ENCODE measurements at regions of chr3 and their contacts with region 1.

Region 1: GRCh38 chr3:112293368-112294321 is at the start of gene SLC9C1:
- DNase-seq: peak in 2 of 5 donors; percentile 43 to 52
- ATAC-seq: peak; percentile 77 to 91 (median 88)
- H3K4me3 ChIP-seq: peak within 1 kb of the TSS; percentile 3 to 58 (median 50)
- H3K27ac ChIP-seq: peak within 1 kb of the TSS; percentile 39 to 78 (median 68)
- H3K4me1 ChIP-seq: peaks cover 0 to 23% (median 4%) of the 10 kb centered on the region in 12 donors
- H3K27me3 ChIP-seq: no peaks in the 10 kb centered on the region
- CTCF ChIP-seq: peak; percentile 40 to 77 (median 62)
- POLR2A ChIP-seq: no peak
- total RNA-seq, gene SLC9C1: 0.48 to 3.8 (median 1.4) TPM

Region 2: DNA sequence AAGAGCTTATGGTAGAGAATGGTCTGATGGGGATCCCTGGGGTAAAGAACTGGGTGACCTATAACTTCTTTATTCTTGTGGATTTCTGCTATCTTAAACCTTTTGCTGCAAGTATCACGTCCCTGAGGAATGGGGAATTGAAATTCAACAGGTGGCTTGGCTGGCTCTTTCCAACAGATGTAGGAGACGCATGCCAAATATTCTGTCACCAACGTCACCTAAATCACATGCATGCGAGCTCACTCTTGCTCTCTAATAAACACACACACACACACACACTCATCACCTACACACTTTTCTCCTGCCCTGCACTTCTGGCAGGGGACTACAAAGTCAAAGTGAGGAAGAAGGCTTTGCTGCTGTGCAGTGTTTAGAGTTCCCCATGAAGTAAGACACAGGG is 1367.8 kb before region 1 on chr3:
- intact Hi-C with region 1: no loop called
- DNase-seq: no peak
- ATAC-seq: peak in 1 of 4 donors; percentile 55
- H3K4me3 ChIP-seq: no peak overlapping the region
- H3K27ac ChIP-seq: no peak overlapping the region
- H3K4me1 ChIP-seq: peaks cover 0 to 6% (median 0%) of the 10 kb centered on the region in 12 donors
- H3K27me3 ChIP-seq: no peaks in the 10 kb centered on the region
- CTCF ChIP-seq: no peak
- POLR2A ChIP-seq: no peak

Region 3: GRCh38 chr3:112074006-112074405 is 219.6 kb before region 1 on chr3:
- intact Hi-C with region 1: no loop called
- DNase-seq: no peak
- ATAC-seq: no peak
- H3K4me3 ChIP-seq: no peak overlapping the region
- H3K27ac ChIP-seq: no peak overlapping the region
- H3K4me1 ChIP-seq: peaks cover 0 to 11% (median 0%) of the 10 kb centered on the region in 12 donors
- H3K27me3 ChIP-seq: no peaks in the 10 kb centered on the region
- CTCF ChIP-seq: no peak
- POLR2A ChIP-seq: no peak

Region 4: DNA sequence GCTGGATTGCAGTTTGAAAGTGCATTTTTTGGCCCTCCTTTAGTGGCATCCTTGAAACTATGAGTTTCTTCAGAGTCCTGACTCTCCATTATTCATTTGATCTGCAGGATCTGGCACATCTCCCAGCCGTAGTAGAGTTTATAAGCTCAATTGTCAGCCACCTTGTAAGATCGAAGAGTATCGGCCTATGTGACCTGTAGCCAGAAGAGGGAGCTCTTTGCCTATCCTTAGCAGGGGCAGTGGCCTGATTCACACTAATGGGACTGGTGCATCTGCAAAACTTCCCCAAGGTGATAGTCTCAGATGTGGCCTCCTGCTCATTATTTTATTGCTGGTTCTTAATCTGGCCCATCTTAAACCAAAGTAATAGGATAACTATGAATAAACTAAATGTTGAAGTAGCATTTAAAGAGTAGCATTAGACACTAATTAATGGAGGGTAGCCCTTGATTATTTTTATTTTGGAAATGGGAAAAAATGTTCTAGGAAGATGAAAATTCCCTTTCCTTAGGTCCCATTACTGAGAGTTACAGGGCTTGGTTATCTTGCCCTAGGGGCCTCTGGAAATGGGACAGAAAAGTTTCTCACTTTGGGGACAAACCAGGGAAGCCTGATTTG is 181.8 kb before region 1 on chr3:
- intact Hi-C with region 1: loop called in 2 of 10 experiments (anchors 5 to 10 kb)
- DNase-seq: peak in 2 of 5 donors; percentile 39 to 40
- ATAC-seq: peak; percentile 64 to 86 (median 77)
- H3K4me3 ChIP-seq: no peak overlapping the region
- H3K27ac ChIP-seq: no peak overlapping the region
- H3K4me1 ChIP-seq: peaks cover 0 to 15% (median 8%) of the 10 kb centered on the region in 12 donors
- H3K27me3 ChIP-seq: no peaks in the 10 kb centered on the region
- CTCF ChIP-seq: peak; percentile 62 to 82 (median 70)
- POLR2A ChIP-seq: no peak

Region 5: GRCh38 chr3:112117841-112118571 is 175.6 kb before region 1 on chr3:
- intact Hi-C with region 1: loop called in 3 of 10 experiments (anchors 5 to 10 kb)
- DNase-seq: peak in 4 of 5 donors; percentile 27 to 65 (median 43)
- ATAC-seq: no peak
- H3K4me3 ChIP-seq: no peak overlapping the region
- H3K27ac ChIP-seq: peak overlapping the region in 3 of 12 donors; percentile 43 to 63 (median 55)
- H3K4me1 ChIP-seq: peaks cover 0 to 48% (median 9%) of the 10 kb centered on the region in 12 donors
- H3K27me3 ChIP-seq: no peaks in the 10 kb centered on the region
- CTCF ChIP-seq: peak in 1 of 12 donors; percentile 7
- POLR2A ChIP-seq: no peak

Region 6: GRCh38 chr3:112128843-112129727 is 164.6 kb before region 1 on chr3:
- intact Hi-C with region 1: loop called in 1 of 10 experiments (anchors 10 kb)
- DNase-seq: no peak
- ATAC-seq: no peak
- H3K4me3 ChIP-seq: no peak overlapping the region
- H3K27ac ChIP-seq: peak overlapping the region in 1 of 12 donors; percentile 13
- H3K4me1 ChIP-seq: peaks cover 0 to 55% (median 14%) of the 10 kb centered on the region in 12 donors
- H3K27me3 ChIP-seq: no peaks in the 10 kb centered on the region
- CTCF ChIP-seq: no peak
- POLR2A ChIP-seq: no peak

Region 7: GRCh38 chr3:112187300-112187699 is 106.3 kb before region 1 on chr3:
- intact Hi-C with region 1: no loop called
- DNase-seq: no peak
- ATAC-seq: no peak
- H3K4me3 ChIP-seq: no peak overlapping the region
- H3K27ac ChIP-seq: no peak overlapping the region
- H3K4me1 ChIP-seq: no peaks in the 10 kb centered on the region
- H3K27me3 ChIP-seq: no peaks in the 10 kb centered on the region
- CTCF ChIP-seq: no peak
- POLR2A ChIP-seq: no peak

Region 8: GRCh38 chr3:112531358-112531781 is 237.7 kb after region 1 on chr3:
- intact Hi-C with region 1: loop called in 3 of 10 experiments (anchors 5 kb)
- DNase-seq: no peak
- ATAC-seq: no peak
- H3K4me3 ChIP-seq: no peak overlapping the region
- H3K27ac ChIP-seq: no peak overlapping the region
- H3K4me1 ChIP-seq: no peaks in the 10 kb centered on the region
- H3K27me3 ChIP-seq: no peaks in the 10 kb centered on the region
- CTCF ChIP-seq: peak; percentile 26 to 67 (median 52)
- POLR2A ChIP-seq: no peak